ENCODE measurements at regions of chr14 and their contacts with region 1.

Region 1: DNA sequence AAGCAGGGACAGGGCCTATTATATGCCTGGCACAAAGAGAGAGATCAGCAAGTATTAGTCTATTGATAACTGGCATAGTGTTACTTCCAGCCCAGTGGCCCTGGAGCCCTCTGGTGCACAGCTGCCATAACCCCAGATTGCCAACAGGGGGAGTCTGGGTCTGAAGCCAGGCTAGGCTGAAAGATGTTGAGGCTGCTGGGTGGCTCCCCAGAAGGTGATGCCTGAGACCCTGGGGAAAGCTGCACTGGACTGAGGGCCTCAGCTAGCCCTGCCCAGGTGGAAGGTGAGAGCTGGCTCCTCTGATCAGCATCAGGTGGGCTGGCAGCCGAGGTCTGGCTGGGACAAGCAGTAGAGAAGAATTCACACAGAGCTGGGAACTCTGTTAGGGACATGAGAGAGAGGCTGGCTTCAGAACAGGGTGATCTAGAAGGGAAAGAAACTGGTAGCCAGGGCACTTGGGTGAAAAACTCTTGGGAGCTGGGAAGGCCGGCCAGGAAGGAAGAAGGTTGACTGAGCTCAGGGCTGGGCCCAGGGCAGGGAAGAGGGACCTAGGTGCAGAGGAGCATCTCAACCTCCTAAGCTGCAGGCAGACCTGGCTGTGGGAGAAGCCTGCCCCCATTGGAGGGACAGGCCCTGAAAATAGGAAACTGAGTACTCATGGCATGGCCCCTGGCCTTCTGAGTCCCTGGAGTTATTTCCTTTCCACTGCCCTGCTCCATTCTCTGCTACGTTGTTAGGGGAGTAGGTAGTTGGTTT is 3.9 kb downstream of the GZMH start:
- DNase-seq: peak in 8 of 9 donors; percentile 18 to 75 (median 46)
- ATAC-seq: peak; percentile 79
- H3K4me3 ChIP-seq: no peak overlapping the region
- H3K4me3 Mint-ChIP-seq: peak overlapping the region in 2 of 10 donors; percentile 52 to 85
- H3K27ac ChIP-seq: no peak overlapping the region
- H3K27ac Mint-ChIP-seq: peak overlapping the region in 6 of 9 donors; percentile 18 to 86 (median 36)
- H3K4me1 ChIP-seq: peaks cover 0 to 51% of the 10 kb centered on the region in 2 donors
- H3K4me1 Mint-ChIP-seq: peaks cover 0 to 56% (median 3%) of the 10 kb centered on the region in 7 donors
- H3K27me3 ChIP-seq: no peaks in the 10 kb centered on the region
- H3K27me3 Mint-ChIP-seq: peaks cover 0 to 4% (median 0%) of the 10 kb centered on the region in 5 donors

Region 2: DNA sequence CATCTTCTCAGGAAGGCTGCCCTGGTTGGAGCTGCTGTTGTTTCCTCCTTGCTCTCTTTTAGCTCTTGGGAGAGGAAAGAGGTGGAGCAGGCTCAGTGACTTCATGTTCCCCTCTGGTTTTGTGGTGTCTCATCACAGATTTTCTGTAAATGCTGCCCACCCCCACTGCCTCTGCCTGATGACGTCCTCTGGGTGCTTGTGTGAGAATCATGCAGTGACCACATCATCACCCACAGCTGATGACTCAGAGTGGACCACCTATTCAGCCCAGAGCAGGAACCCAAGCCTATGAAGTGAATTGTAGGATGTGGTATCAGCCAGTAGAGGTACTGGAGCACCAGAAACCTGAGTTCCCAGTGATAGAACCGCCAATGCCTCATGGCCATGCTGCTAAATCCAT is 28.5 kb after region 1 on chr14 and contains the start of gene GZMB:
- CTCF ChIA-PET with region 1: interaction called, 4 read pairs
- POLR2A ChIA-PET with region 1: no interaction called
- intact Hi-C with region 1: loop called in 1 of 2 experiments (anchors 2 kb)
- DNase-seq: peak in 1 of 9 donors; percentile 75
- ATAC-seq: peak; percentile 88
- H3K4me3 ChIP-seq: no peak within 1 kb of the TSS
- H3K4me3 Mint-ChIP-seq: peak within 1 kb of the TSS in 3 of 10 donors; percentile 45 to 96 (median 85)
- H3K27ac ChIP-seq: no peak within 1 kb of the TSS
- H3K27ac Mint-ChIP-seq: peak within 1 kb of the TSS in 2 of 9 donors; percentile 7 to 95
- H3K4me1 ChIP-seq: peaks cover 0 to 11% of the 10 kb centered on the region in 2 donors
- H3K4me1 Mint-ChIP-seq: peaks cover 0 to 62% (median 0%) of the 10 kb centered on the region in 7 donors
- H3K27me3 ChIP-seq: no peaks in the 10 kb centered on the region
- H3K27me3 Mint-ChIP-seq: peaks cover 0 to 5% (median 0%) of the 10 kb centered on the region in 5 donors
- total RNA-seq, gene GZMB: 1.00 to 692 (median 20.3) TPM

Region 3: GRCh38 chr14:24678801-24679247 is 73.2 kb after region 1 on chr14:
- CTCF ChIA-PET with region 1: interaction called, 10 read pairs
- POLR2A ChIA-PET with region 1: no interaction called
- intact Hi-C with region 1: loop called (anchors 1 kb)
- DNase-seq: peak; percentile 45 to 85 (median 78)
- ATAC-seq: peak; percentile 96
- H3K4me3 ChIP-seq: peak overlapping the region; percentile 33
- H3K4me3 Mint-ChIP-seq: peak overlapping the region; percentile 71 to 93 (median 86)
- H3K27ac ChIP-seq: no peak overlapping the region
- H3K27ac Mint-ChIP-seq: peak overlapping the region; percentile 33 to 95 (median 70)
- H3K4me1 ChIP-seq: peaks cover 17 to 44% of the 10 kb centered on the region in 2 donors
- H3K4me1 Mint-ChIP-seq: peaks cover 35 to 65% (median 57%) of the 10 kb centered on the region in 7 donors
- H3K27me3 ChIP-seq: no peaks in the 10 kb centered on the region
- H3K27me3 Mint-ChIP-seq: peaks cover 0 to 4% (median 0%) of the 10 kb centered on the region in 5 donors

Region 4: GRCh38 chr14:24710403-24711112 is 104.9 kb after region 1 on chr14:
- CTCF ChIA-PET with region 1: interaction called, 3 read pairs
- POLR2A ChIA-PET with region 1: no interaction called
- intact Hi-C with region 1: loop called in 1 of 2 experiments (anchors 1 kb)
- DNase-seq: peak in 7 of 9 donors; percentile 16 to 48 (median 40)
- ATAC-seq: peak; percentile 80
- H3K4me3 ChIP-seq: no peak overlapping the region
- H3K4me3 Mint-ChIP-seq: no peak overlapping the region
- H3K27ac ChIP-seq: no peak overlapping the region
- H3K27ac Mint-ChIP-seq: no peak overlapping the region
- H3K4me1 ChIP-seq: no peaks in the 10 kb centered on the region
- H3K4me1 Mint-ChIP-seq: peaks cover 0 to 4% (median 0%) of the 10 kb centered on the region in 7 donors
- H3K27me3 ChIP-seq: no peaks in the 10 kb centered on the region
- H3K27me3 Mint-ChIP-seq: peaks cover 3 to 18% (median 9%) of the 10 kb centered on the region in 5 donors